ENCODE measurements at regions of chr6 and their contacts with region 1.

Region 1: DNA sequence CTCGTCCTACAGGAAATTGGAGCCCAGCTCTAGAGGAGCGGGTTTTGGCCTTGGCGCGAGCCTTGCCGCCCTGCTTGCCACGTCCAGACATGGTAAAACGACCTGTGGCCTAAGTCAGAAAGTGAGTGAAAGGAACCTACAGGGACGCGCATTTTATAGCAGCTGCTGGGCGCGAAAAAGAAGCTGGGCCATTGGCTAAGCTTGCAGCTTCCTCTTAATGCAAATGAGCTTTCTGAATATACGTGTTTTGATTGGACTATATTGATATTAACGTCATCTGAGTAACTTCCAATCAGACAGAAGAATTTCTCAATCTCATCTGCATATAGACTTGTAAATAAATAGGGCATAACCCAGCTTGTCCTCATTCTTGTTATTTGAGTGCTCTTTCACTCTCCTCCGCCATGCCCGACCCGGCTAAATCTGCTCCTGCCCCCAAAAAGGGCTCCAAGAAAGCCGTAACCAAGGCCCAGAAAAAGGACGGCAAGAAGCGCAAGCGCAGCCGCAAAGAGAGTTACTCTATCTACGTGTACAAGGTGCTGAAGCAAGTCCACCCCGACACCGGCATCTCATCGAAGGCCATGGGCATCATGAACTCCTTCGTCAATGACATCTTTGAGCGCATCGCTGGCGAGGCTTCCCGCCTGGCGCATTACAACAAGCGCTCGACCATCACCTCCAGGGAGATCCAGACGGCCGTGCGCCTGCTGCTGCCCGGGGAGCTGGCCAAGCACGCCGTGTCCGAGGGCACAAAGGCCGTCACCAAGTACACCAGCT is 18.9 kb downstream of the OR2B2 start:
- DNase-seq: peak; percentile 67
- ATAC-seq: peak; percentile 71
- H3K4me3 Mint-ChIP-seq: no peak overlapping the region
- H3K27ac Mint-ChIP-seq: no peak overlapping the region
- H3K4me1 Mint-ChIP-seq: peaks cover 32% of the 10 kb centered on the region
- H3K27me3 Mint-ChIP-seq: no peaks in the 10 kb centered on the region
- CTCF ChIP-seq: no peak

Region 2: GRCh38 chr6:26025894-26026832 is 1867.1 kb before region 1 on chr6:
- CTCF ChIA-PET with region 1: no interaction called
- POLR2A ChIA-PET with region 1: interaction called, 34 read pairs
- intact Hi-C with region 1: loop called (anchors 2 kb)
- DNase-seq: peak; percentile 76
- ATAC-seq: peak; percentile 39
- H3K4me3 Mint-ChIP-seq: peak overlapping the region; percentile 96
- H3K27ac Mint-ChIP-seq: peak overlapping the region; percentile 99
- H3K4me1 Mint-ChIP-seq: peaks cover 35% of the 10 kb centered on the region
- H3K27me3 Mint-ChIP-seq: peaks cover 2% of the 10 kb centered on the region
- CTCF ChIP-seq: no peak

Region 3: DNA sequence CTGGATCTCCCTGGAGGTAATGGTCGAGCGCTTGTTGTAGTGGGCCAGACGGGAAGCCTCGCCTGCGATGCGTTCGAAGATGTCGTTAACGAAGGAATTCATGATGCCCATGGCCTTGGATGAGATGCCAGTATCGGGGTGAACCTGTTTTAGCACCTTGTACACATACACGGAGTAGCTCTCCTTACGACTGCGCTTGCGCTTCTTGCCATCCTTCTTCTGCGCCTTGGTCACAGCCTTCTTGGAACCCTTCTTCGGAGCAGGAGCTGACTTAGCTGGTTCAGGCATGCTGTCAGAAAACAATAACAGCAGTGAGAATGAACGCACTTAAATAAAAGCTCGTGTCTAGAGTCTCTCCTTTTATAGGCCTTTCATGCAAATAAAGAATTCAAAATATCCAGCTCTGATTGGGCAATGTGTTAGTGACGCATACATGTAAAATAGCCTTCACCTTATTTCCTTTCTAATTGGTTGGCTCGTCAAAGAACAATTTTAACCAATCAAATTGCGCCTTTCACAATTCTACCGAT is 1676.8 kb before region 1 on chr6:
- CTCF ChIA-PET with region 1: no interaction called
- POLR2A ChIA-PET with region 1: interaction called, 14 read pairs
- intact Hi-C with region 1: no loop called
- DNase-seq: peak; percentile 62
- ATAC-seq: peak; percentile 78
- H3K4me3 Mint-ChIP-seq: no peak overlapping the region
- H3K27ac Mint-ChIP-seq: no peak overlapping the region
- H3K4me1 Mint-ChIP-seq: peaks cover 12% of the 10 kb centered on the region
- H3K27me3 Mint-ChIP-seq: no peaks in the 10 kb centered on the region
- CTCF ChIP-seq: no peak

Region 4: GRCh38 chr6:27132532-27133280 is 760.5 kb before region 1 on chr6:
- CTCF ChIA-PET with region 1: interaction called, 13 read pairs
- POLR2A ChIA-PET with region 1: interaction called, 85 read pairs
- intact Hi-C with region 1: loop called (anchors 1 kb)
- DNase-seq: peak; percentile 77
- ATAC-seq: peak; percentile 84
- H3K4me3 Mint-ChIP-seq: no peak overlapping the region
- H3K27ac Mint-ChIP-seq: no peak overlapping the region
- H3K4me1 Mint-ChIP-seq: peaks cover 14% of the 10 kb centered on the region
- H3K27me3 Mint-ChIP-seq: no peaks in the 10 kb centered on the region
- CTCF ChIP-seq: no peak

Region 5: GRCh38 chr6:27472617-27473400 is 420.4 kb before region 1 on chr6 and contains the start of gene ZNF184:
- CTCF ChIA-PET with region 1: no interaction called
- POLR2A ChIA-PET with region 1: interaction called, 16 read pairs
- intact Hi-C with region 1: no loop called
- DNase-seq: peak; percentile 85
- ATAC-seq: peak; percentile 92
- H3K4me3 Mint-ChIP-seq: peak within 1 kb of the TSS; percentile 95
- H3K27ac Mint-ChIP-seq: peak within 1 kb of the TSS; percentile 95
- H3K4me1 Mint-ChIP-seq: peaks cover 34% of the 10 kb centered on the region
- H3K27me3 Mint-ChIP-seq: no peaks in the 10 kb centered on the region
- CTCF ChIP-seq: no peak
- total RNA-seq, gene ZNF184: 8.1 and 8.6 TPM in 2 replicates

Region 6: DNA sequence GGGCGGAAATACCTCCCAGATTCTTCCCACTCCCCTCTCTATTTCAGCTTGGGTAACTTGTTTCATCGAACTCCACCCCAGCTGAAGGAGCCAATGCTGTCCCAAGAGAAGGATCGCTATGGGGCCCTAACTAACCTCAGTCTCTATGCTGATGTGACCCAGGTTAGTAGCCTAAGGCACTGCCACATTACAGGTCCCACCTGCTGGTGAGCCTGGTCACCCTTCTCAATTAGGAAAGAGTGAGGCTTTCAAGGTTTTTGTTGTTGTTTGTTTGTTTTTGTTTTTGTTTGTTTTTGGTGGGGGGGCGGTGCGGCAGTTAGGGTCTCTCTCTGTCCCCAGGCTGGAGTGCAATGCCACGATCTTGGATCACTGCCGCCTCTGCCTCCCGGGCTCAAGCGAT is 149.4 kb before region 1 on chr6:
- CTCF ChIA-PET with region 1: no interaction called
- POLR2A ChIA-PET with region 1: no interaction called
- intact Hi-C with region 1: no loop called
- DNase-seq: no peak
- ATAC-seq: no peak
- H3K4me3 Mint-ChIP-seq: no peak overlapping the region
- H3K27ac Mint-ChIP-seq: no peak overlapping the region
- H3K4me1 Mint-ChIP-seq: no peaks in the 10 kb centered on the region
- H3K27me3 Mint-ChIP-seq: peaks cover 24% of the 10 kb centered on the region
- CTCF ChIP-seq: no peak

Region 7: GRCh38 chr6:27809939-27810767 is 83.1 kb before region 1 on chr6:
- CTCF ChIA-PET with region 1: interaction called, 27 read pairs
- POLR2A ChIA-PET with region 1: interaction called, 251 read pairs
- intact Hi-C with region 1: loop called (anchors 1 kb)
- DNase-seq: peak; percentile 68
- ATAC-seq: peak; percentile 59
- H3K4me3 Mint-ChIP-seq: peak overlapping the region; percentile 93
- H3K27ac Mint-ChIP-seq: peak overlapping the region; percentile 97
- H3K4me1 Mint-ChIP-seq: peaks cover 59% of the 10 kb centered on the region
- H3K27me3 Mint-ChIP-seq: no peaks in the 10 kb centered on the region
- CTCF ChIP-seq: no peak

Region 8: DNA sequence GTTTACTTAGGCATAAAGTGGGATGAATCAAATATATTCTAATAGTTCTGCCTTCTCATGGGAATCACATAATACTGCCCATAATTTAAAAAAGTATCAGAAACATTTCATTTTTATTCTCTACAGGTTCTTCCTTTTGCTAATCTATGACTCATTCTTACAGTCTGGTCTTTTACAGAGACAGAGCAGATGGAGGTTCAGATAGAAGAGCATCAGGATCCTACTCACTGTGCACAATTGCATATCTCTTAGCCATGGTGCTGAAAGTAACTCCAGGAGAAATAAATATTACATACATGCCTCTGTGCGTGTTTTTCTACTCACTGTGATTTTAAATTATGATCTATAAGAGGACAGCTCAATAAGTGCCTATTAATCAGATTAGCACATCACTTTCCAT is 47.5 kb after region 1 on chr6:
- CTCF ChIA-PET with region 1: no interaction called
- POLR2A ChIA-PET with region 1: no interaction called
- intact Hi-C with region 1: no loop called
- DNase-seq: no peak
- ATAC-seq: no peak
- H3K4me3 Mint-ChIP-seq: no peak overlapping the region
- H3K27ac Mint-ChIP-seq: no peak overlapping the region
- H3K4me1 Mint-ChIP-seq: no peaks in the 10 kb centered on the region
- H3K27me3 Mint-ChIP-seq: peaks cover 14% of the 10 kb centered on the region
- CTCF ChIP-seq: no peak

Region 9: GRCh38 chr6:28355743-28356665 is 462.8 kb after region 1 on chr6:
- CTCF ChIA-PET with region 1: interaction called, 8 read pairs
- POLR2A ChIA-PET with region 1: interaction called, 8 read pairs
- intact Hi-C with region 1: loop called (anchors 2 kb)
- DNase-seq: peak; percentile 41
- ATAC-seq: peak; percentile 85
- H3K4me3 Mint-ChIP-seq: peak overlapping the region; percentile 91
- H3K27ac Mint-ChIP-seq: peak overlapping the region; percentile 71
- H3K4me1 Mint-ChIP-seq: peaks cover 21% of the 10 kb centered on the region
- H3K27me3 Mint-ChIP-seq: no peaks in the 10 kb centered on the region
- CTCF ChIP-seq: peak; percentile 82

Measured in activated B cell treated with CpG ODN at 0.5 μM for 24 hours (primary cell).